Caco-2 (cell line): ENCODE measurements at regions of chr7 and their contacts with region 1.

Region 1: DNA sequence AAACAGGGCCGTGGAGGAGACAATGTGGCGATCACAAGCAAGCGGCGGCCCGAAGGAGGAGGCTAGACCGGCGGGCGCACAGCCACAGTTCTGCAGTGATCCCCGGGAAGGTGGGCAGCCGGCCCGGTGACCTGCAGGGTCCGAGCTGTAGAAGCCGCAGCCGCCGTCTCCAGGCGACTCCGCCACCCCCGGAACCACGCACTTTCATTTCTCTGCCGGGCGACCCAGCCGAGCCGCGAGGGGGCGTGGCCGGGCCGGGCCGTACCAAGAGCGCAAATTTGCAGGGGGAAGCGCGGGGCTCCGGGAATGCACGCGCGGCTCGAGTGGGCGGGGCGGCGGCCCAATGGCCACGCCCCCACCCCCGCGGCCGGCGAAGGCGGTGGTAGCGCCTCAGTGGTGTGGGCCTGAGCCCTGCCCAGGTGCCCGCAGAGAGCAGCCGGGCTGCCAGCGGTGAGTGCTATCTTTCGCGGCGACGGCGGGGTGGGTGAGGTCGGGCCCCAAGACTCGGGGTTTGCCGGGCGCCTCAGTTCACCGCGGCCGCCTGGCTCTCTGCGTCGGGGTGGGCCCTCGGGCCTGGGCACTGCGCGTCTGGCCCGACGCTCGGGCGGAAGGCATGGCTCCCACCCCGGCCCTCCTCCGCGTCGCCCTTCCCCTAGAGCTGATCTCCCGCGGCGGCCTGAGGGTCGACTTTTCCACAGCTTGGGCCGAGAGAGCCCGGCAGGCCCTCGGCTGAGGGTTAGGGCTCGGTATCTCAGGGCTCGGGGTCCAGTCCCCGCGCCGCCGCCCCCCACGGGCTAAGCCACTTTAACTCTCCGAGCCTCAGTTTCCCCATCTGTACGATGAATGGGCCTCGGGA is at the start of gene POR:
- DNase-seq: peak; percentile 94 to 99
- H3K4me3 ChIP-seq: peak within 1 kb of the TSS; percentile 95
- H3K4me3 Mint-ChIP-seq: peak within 1 kb of the TSS; percentile 73
- H3K27ac Mint-ChIP-seq: peak within 1 kb of the TSS; percentile 63
- H3K4me1 ChIP-seq: no peaks in the 10 kb centered on the region
- H3K4me1 Mint-ChIP-seq: no peaks in the 10 kb centered on the region
- H3K27me3 ChIP-seq: no peaks in the 10 kb centered on the region
- H3K27me3 Mint-ChIP-seq: no peaks in the 10 kb centered on the region
- CTCF ChIP-seq: no peak
- total RNA-seq, gene POR: 162 and 171 TPM in 2 replicates

Region 2: DNA sequence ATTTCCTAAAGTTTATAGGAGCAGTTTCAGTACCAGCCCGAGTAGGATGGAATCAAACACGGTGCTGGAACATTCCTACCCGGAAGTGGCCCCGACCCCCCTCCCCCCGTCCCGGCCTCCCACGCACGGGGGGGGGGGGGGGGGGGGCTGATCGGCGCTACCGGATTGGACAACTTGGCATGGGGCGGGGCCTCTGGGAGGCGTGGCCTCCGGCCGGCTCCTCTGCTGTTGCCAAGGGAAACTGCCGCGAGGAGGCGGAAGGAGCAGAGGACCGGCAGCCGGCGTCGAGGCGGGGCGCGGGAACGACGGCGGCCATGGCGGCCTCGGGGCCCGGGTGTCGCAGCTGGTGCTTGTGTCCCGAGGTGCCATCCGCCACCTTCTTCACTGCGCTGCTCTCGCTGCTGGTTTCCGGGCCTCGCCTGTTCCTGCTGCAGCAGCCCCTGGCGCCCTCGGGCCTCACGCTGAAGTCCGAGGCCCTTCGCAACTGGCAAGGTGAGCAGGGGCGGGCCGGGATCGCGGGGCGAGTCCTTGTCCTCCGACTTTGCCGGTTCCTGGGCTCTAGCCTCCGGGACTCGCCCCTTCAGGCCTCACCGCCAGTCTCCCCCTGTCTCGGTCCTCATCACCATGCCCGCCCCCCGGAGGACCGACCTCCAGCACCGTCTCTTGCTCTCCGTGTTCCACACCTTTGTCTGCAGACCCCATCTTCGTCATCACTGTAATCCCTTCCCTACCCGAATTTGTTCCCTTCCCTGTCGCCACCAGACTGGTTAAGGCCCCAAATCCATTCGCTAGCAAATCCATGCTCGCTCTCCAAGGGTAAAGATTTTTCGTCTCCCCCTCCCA is 36.0 kb before region 1 on chr7 and contains the start of gene RHBDD2:
- CTCF ChIA-PET with region 1: no interaction called
- POLR2A ChIA-PET with region 1: no interaction called
- intact Hi-C with region 1: loop called (anchors 2 kb)
- DNase-seq: peak; percentile 95
- H3K4me3 ChIP-seq: peak within 1 kb of the TSS; percentile 81
- H3K4me3 Mint-ChIP-seq: peak within 1 kb of the TSS; percentile 94
- H3K27ac Mint-ChIP-seq: peak within 1 kb of the TSS; percentile 93
- H3K4me1 ChIP-seq: peaks cover 6% of the 10 kb centered on the region
- H3K4me1 Mint-ChIP-seq: peaks cover 8% of the 10 kb centered on the region
- H3K27me3 ChIP-seq: no peaks in the 10 kb centered on the region
- H3K27me3 Mint-ChIP-seq: no peaks in the 10 kb centered on the region
- CTCF ChIP-seq: peak in 1 of 2 experiments; percentile 10
- total RNA-seq, gene RHBDD2: 50.1 and 55.6 TPM in 2 replicates

Region 3: DNA sequence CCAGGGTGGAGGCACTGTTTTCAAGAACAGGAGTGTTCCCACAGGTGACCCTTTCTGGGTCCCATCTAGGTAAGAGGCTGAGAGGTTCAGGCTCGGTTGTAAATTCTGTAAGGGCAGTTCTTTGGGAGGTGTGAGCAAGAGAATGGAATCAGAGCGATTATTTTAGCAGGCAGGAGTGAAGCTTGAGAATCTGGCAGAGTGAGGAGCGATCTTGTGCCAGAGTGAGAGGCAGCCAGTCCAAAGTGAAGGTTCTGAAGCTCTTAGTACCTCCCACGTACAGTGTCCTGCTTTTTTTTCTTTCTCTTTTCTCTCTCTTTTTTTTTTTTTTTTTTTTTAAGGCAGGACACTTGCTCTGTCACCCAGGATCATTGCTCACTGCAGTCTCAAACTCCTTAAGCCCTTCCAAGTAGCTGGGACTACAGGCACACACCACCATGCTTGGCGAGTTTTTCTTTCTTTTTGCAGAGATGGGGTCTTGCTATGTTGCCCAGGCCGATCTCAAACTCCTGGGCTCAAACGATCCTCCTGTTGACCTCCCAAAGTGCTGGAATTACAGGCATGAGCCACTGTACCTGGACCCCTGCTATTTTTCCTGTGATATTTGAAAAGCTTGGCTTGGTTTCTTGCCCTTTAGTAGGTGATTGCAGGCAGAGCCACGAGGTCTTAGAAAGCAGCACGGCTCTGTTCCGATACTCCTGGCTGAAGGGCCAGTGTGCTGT is 10.9 kb after region 1 on chr7:
- CTCF ChIA-PET with region 1: no interaction called
- POLR2A ChIA-PET with region 1: interaction called, 12 read pairs
- intact Hi-C with region 1: no loop called
- DNase-seq: no peak
- H3K4me3 ChIP-seq: no peak overlapping the region
- H3K4me3 Mint-ChIP-seq: no peak overlapping the region
- H3K27ac Mint-ChIP-seq: no peak overlapping the region
- H3K4me1 ChIP-seq: 0 out of 2 replicates have a peak, but pooled peaks cover 10% of the 10 kb centered on the region
- H3K4me1 Mint-ChIP-seq: peaks cover 1% of the 10 kb centered on the region
- H3K27me3 ChIP-seq: no peaks in the 10 kb centered on the region
- H3K27me3 Mint-ChIP-seq: no peaks in the 10 kb centered on the region
- CTCF ChIP-seq: no peak

Region 4: DNA sequence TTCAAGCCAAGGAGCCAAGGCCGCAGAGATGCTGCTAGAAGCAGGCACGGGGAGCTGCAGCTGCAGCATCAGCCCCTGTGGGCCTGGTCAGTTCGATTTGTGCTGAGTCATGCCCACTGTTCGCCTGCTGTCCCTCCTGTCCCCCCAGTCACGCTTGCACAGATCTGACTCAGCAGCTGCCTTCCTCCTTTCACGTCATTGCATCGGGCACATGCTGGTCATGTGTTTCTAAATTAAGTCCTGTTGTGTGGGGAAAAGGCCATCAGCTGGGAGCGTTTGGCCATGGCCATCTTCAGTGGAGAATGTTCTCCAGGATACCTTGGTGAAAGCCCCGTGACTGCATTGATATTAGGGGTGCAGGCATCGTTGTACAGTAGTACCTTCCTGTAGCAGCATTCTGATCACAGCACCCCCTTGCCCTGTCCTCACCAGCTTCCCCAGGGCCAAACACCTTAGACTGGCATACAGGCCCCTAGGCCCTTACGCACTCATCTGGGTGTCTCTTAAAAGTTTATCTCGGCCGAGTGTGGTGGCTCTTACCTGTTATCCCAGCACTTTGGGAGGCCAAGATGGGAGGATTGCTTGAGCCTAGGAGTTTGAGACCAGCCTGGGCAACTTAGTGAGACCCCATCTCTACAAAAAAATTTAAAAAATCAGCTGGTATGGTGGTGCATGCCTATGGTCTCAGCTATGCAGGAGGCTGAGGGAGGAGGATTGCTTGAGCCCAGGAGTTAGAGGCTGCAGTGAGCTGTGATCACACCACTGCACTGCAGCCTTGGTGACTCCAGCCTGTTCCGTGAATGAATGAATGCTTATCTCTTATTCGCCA is 23.2 kb after region 1 on chr7:
- CTCF ChIA-PET with region 1: interaction called, 11 read pairs
- POLR2A ChIA-PET with region 1: no interaction called
- intact Hi-C with region 1: no loop called
- DNase-seq: peak; percentile 46 to 59
- H3K4me3 ChIP-seq: no peak overlapping the region
- H3K4me3 Mint-ChIP-seq: no peak overlapping the region
- H3K27ac Mint-ChIP-seq: peak overlapping the region; percentile 43
- H3K4me1 ChIP-seq: peaks cover 15% of the 10 kb centered on the region
- H3K4me1 Mint-ChIP-seq: peaks cover 18% of the 10 kb centered on the region
- H3K27me3 ChIP-seq: no peaks in the 10 kb centered on the region
- H3K27me3 Mint-ChIP-seq: no peaks in the 10 kb centered on the region
- CTCF ChIP-seq: no peak